IMR-90 (cell line): ENCODE measurements at regions of chr4 and their contacts with region 1.

Region 1: GRCh38 chr4:173288296-173288695 is 45.9 kb downstream of the HMGB2 start:
- DNase-seq: peak; percentile 57
- ATAC-seq: peak; percentile 42; the same call in 1 of the 2 replicates
- H3K4me3 ChIP-seq: no peak overlapping the region
- H3K27ac ChIP-seq: no peak overlapping the region
- H3K4me1 ChIP-seq: no peaks in the 10 kb centered on the region
- H3K27me3 ChIP-seq: no peaks in the 10 kb centered on the region
- CTCF ChIP-seq: peak; percentile 53
- POLR2A ChIP-seq: no peak
- RAD21 ChIP-seq: peak; percentile 50

Region 2: DNA sequence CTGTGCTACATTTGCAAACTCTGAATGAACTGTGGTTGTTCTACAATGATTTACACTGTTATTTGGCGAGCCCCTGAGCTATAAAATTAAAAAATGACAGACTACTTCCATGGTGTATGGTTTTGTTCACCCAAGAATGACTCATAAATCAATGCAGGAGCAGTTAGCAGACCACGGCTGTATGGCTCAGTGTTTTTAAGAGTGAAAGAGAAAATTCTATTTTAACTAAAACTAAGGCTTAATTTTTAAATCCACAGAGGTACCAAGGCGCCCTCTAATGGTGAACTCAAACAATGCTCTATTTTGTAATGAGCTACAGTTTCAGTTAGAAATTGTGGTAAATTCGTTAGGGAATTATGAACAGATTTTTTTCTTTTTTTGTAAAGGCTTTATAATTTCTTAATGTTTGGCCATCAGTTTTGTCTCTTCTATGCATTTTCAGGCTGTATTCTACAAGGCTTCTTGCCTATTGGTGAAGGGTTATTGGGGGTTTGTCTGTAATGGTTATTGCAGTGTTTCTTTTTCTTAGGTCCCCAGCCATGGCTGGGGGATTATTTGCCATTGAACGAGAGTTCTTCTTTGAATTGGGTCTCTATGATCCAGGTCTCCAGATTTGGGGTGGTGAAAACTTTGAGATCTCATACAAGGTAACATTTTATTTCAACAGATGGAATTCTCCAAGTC is 13.4 kb after region 1 on chr4:
- CTCF ChIA-PET with region 1: interaction called, 12 read pairs
- POLR2A ChIA-PET with region 1: no interaction called
- dilution Hi-C with region 1: no loop called
- in situ Hi-C with region 1: no loop called
- intact Hi-C with region 1: no loop called
- DNase-seq: peak; percentile 66
- ATAC-seq: peak; percentile 75
- H3K4me3 ChIP-seq: no peak overlapping the region
- H3K27ac ChIP-seq: no peak overlapping the region
- H3K4me1 ChIP-seq: no peaks in the 10 kb centered on the region
- H3K27me3 ChIP-seq: no peaks in the 10 kb centered on the region
- CTCF ChIP-seq: peak; percentile 74
- POLR2A ChIP-seq: no peak
- RAD21 ChIP-seq: peak; percentile 63